T-cell (primary cell): ENCODE measurements at regions of chr6 and their contacts with region 1.

Region 1: DNA sequence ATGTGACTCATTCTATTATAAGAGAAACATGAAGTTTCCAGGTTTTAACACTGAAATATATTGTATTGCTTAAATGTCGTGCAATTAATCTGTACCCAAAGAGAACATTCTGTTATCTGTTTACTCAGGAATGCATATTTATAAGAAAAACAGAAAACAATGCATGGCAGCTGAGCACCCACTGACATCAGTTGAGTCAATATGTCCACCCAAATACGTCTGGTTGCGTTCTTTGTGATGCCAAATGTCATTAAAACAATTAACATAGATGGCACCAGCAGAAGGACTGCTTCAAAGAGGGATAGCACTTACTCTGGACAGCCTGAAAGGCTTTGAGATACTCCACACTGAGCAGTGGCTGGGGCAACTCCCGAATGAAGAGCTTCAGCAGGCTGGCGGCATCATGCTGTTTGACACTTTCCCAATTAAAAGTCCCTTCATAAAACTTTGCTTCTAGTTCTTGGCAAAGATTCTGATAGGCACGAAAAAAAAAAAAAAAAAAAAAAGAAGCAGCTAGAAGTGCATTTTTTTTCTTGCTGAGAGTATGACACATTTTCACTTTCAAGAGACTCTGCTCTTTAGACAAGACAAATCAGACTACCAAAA is 102.3 kb downstream of the ARHGAP18 start:
- DNase-seq: no peak
- ATAC-seq: no peak
- H3K4me3 ChIP-seq: no peak overlapping the region
- H3K4me3 Mint-ChIP-seq: no peak overlapping the region
- H3K27ac ChIP-seq: no peak overlapping the region
- H3K27ac Mint-ChIP-seq: no peak overlapping the region
- H3K4me1 ChIP-seq: no peaks in the 10 kb centered on the region
- H3K4me1 Mint-ChIP-seq: no peaks in the 10 kb centered on the region
- H3K27me3 ChIP-seq: no peaks in the 10 kb centered on the region
- H3K27me3 Mint-ChIP-seq: no peaks in the 10 kb centered on the region

Region 2: GRCh38 chr6:129490521-129491245 is 117.0 kb before region 1 on chr6:
- CTCF ChIA-PET with region 1: no interaction called
- POLR2A ChIA-PET with region 1: no interaction called
- DNase-seq: peak in 34 of 35 experiments; percentile 8 to 90 (median 50)
- ATAC-seq: peak; percentile 93 to 97 (median 95)
- H3K4me3 ChIP-seq: peak overlapping the region in 1 of 2 donors; percentile 34
- H3K4me3 Mint-ChIP-seq: peak overlapping the region; percentile 68 to 74 (median 73)
- H3K27ac ChIP-seq: peak overlapping the region; percentile 91
- H3K27ac Mint-ChIP-seq: peak overlapping the region; percentile 94 to 95
- H3K4me1 ChIP-seq: peaks cover 15 to 20% of the 10 kb centered on the region in 2 experiments
- H3K4me1 Mint-ChIP-seq: peaks cover 26 to 35% (median 29%) of the 10 kb centered on the region in 3 donors
- H3K27me3 ChIP-seq: no peaks in the 10 kb centered on the region
- H3K27me3 Mint-ChIP-seq: no peaks in the 10 kb centered on the region

Region 3: GRCh38 chr6:129575378-129576118 is 32.1 kb before region 1 on chr6:
- CTCF ChIA-PET with region 1: no interaction called
- POLR2A ChIA-PET with region 1: no interaction called
- DNase-seq: peak in 1 of 35 experiments; percentile 51
- ATAC-seq: no peak
- H3K4me3 ChIP-seq: peak overlapping the region in 1 of 2 donors; percentile 10
- H3K4me3 Mint-ChIP-seq: peak overlapping the region; percentile 37 to 57 (median 50)
- H3K27ac ChIP-seq: no peak overlapping the region
- H3K27ac Mint-ChIP-seq: no peak overlapping the region
- H3K4me1 ChIP-seq: no peaks in the 10 kb centered on the region
- H3K4me1 Mint-ChIP-seq: peaks cover 5 to 10% (median 7%) of the 10 kb centered on the region in 3 donors
- H3K27me3 ChIP-seq: no peaks in the 10 kb centered on the region
- H3K27me3 Mint-ChIP-seq: no peaks in the 10 kb centered on the region

Region 4: DNA sequence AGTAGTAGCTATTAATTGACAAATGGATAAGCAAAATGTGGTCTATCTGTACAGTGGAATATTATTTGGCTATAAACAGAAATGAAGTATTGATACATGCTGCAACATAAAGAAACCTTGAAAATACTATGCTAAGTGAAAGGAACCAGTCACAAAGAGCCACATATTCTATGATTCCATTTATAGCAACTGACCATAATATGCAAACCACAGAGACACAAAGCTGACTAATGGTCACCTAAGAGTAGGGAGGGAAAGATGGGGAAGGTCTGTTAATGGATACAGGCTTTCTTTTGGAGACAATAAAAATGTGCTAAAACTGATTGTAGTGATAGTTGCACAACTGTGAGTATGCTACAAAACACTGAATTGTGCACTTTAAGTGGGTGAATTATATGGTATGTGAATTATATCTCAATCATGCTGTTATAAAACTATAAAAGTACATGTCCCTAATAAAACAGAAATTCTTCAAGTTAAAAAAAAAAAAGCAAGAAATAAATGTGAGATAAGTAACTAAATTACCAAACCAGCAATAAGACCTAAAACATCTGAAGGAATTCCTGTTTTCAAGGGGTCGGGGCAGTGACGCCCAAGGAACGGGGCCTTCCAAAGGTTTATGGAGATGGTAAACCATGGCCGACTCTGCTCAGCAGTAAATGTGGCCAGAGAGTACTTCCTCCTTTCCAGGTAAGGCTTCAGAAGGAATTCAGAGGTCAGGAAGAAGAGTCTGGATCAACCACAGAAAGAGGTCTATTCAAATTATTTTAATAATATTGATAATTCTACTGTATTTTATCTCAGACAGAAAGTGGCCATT is 26.9 kb after region 1 on chr6:
- CTCF ChIA-PET with region 1: no interaction called
- POLR2A ChIA-PET with region 1: interaction called in 1 of 2 experiments, 11 read pairs
- DNase-seq: no peak
- ATAC-seq: no peak
- H3K4me3 ChIP-seq: no peak overlapping the region
- H3K4me3 Mint-ChIP-seq: no peak overlapping the region
- H3K27ac ChIP-seq: no peak overlapping the region
- H3K27ac Mint-ChIP-seq: no peak overlapping the region
- H3K4me1 ChIP-seq: no peaks in the 10 kb centered on the region
- H3K4me1 Mint-ChIP-seq: peaks cover 0 to 6% (median 4%) of the 10 kb centered on the region in 3 donors
- H3K27me3 ChIP-seq: no peaks in the 10 kb centered on the region
- H3K27me3 Mint-ChIP-seq: no peaks in the 10 kb centered on the region

Region 5: DNA sequence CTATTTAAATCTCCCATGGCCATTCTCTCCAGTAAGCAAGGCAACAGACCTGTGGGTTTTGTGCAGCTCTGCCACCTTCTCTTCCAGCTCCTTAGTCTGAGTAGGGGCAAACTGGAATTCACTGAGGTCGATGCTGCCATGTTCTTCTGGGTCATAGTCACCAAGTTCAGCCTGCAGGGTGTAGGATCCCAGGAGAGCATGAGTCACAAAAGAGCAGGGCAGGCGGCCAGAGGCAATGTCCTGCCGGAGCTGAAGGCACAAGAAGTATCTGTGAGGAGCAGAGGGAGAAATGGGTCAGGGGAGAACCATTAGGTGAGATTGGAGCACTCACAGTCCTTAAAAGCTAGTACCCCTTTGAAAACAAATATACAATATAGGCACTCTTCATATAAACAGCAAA is 1293.2 kb after region 1 on chr6:
- CTCF ChIA-PET with region 1: no interaction called
- POLR2A ChIA-PET with region 1: interaction called in 1 of 2 experiments, 10 read pairs
- DNase-seq: no peak
- ATAC-seq: no peak
- H3K4me3 ChIP-seq: no peak overlapping the region
- H3K4me3 Mint-ChIP-seq: no peak overlapping the region
- H3K27ac ChIP-seq: no peak overlapping the region
- H3K27ac Mint-ChIP-seq: no peak overlapping the region
- H3K4me1 ChIP-seq: no peaks in the 10 kb centered on the region
- H3K4me1 Mint-ChIP-seq: no peaks in the 10 kb centered on the region
- H3K27me3 ChIP-seq: no peaks in the 10 kb centered on the region
- H3K27me3 Mint-ChIP-seq: no peaks in the 10 kb centered on the region